IMR-90 (cell line): ENCODE measurements at regions of chr12 and their contacts with region 1.

Region 1: GRCh38 chr12:100799770-100800169 is 5.2 kb downstream of the ANO4 start:
- DNase-seq: peak; percentile 75
- ATAC-seq: peak; percentile 30
- H3K4me3 ChIP-seq: no peak overlapping the region
- H3K27ac ChIP-seq: peak overlapping the region; percentile 82
- H3K4me1 ChIP-seq: peaks cover 20% of the 10 kb centered on the region
- H3K27me3 ChIP-seq: no peaks in the 10 kb centered on the region
- CTCF ChIP-seq: no peak
- POLR2A ChIP-seq: no peak
- RAD21 ChIP-seq: no peak

Region 2: GRCh38 chr12:100706033-100706432 is 93.7 kb before region 1 on chr12:
- CTCF ChIA-PET with region 1: no interaction called
- POLR2A ChIA-PET with region 1: interaction called, 12 read pairs
- dilution Hi-C with region 1: no loop called
- in situ Hi-C with region 1: no loop called
- intact Hi-C with region 1: no loop called
- DNase-seq: peak; percentile 92
- ATAC-seq: peak; percentile 91
- H3K4me3 ChIP-seq: no peak overlapping the region
- H3K27ac ChIP-seq: no peak overlapping the region
- H3K4me1 ChIP-seq: peaks cover 2% of the 10 kb centered on the region; the same call in 1 of the 2 replicates
- H3K27me3 ChIP-seq: no peaks in the 10 kb centered on the region
- CTCF ChIP-seq: no peak
- POLR2A ChIP-seq: no peak
- RAD21 ChIP-seq: no peak

Region 3: DNA sequence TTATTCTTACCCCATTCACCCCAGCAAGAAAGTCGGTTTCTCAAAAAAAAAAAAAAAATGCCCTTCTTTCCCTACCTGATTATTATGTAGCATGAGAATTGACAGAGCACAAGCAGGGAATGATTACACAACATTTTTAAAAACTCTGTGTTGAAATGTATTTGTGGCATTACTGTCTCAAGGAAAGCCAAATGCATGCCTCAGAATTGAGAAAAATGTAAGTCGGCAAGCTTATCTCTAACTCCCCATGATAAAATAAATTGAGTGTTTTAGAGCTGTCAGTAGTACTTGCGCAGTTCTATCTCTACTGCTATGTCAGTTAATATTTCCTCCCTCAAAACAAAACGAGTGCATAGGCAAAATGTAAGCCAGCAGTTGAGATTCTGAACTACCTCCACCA is 20.5 kb after region 1 on chr12:
- CTCF ChIA-PET with region 1: no interaction called
- POLR2A ChIA-PET with region 1: no interaction called
- dilution Hi-C with region 1: no loop called
- in situ Hi-C with region 1: no loop called
- intact Hi-C with region 1: loop called (anchors 2 kb)
- DNase-seq: peak; percentile 67
- ATAC-seq: peak; percentile 66
- H3K4me3 ChIP-seq: no peak overlapping the region
- H3K27ac ChIP-seq: peak overlapping the region; percentile 84; the same call in 1 of the 2 replicates
- H3K4me1 ChIP-seq: peaks cover 4% of the 10 kb centered on the region; the same call in 1 of the 2 replicates
- H3K27me3 ChIP-seq: no peaks in the 10 kb centered on the region
- CTCF ChIP-seq: no peak
- POLR2A ChIP-seq: no peak
- RAD21 ChIP-seq: no peak